H1 (cell line): ENCODE measurements at regions of chr11 and their contacts with region 1.

Region 1: GRCh38 chr11:119999220-119999619 is 138.7 kb downstream of the TRIM29 start:
- DNase-seq: no peak
- H3K4me3 ChIP-seq: no peak overlapping the region
- H3K27ac ChIP-seq: no peak overlapping the region
- H3K4me1 ChIP-seq: peaks cover 0 to 11% (median 7%) of the 10 kb centered on the region in 4 experiments; a peak in 4 of 7 replicates
- H3K27me3 ChIP-seq: no peaks in the 10 kb centered on the region
- CTCF ChIP-seq: peak; percentile 43 to 57 (median 55)
- EP300 ChIP-seq: no peak
- POLR2A ChIP-seq: no peak
- RAD21 ChIP-seq: peak; percentile 69 to 78

Region 2: DNA sequence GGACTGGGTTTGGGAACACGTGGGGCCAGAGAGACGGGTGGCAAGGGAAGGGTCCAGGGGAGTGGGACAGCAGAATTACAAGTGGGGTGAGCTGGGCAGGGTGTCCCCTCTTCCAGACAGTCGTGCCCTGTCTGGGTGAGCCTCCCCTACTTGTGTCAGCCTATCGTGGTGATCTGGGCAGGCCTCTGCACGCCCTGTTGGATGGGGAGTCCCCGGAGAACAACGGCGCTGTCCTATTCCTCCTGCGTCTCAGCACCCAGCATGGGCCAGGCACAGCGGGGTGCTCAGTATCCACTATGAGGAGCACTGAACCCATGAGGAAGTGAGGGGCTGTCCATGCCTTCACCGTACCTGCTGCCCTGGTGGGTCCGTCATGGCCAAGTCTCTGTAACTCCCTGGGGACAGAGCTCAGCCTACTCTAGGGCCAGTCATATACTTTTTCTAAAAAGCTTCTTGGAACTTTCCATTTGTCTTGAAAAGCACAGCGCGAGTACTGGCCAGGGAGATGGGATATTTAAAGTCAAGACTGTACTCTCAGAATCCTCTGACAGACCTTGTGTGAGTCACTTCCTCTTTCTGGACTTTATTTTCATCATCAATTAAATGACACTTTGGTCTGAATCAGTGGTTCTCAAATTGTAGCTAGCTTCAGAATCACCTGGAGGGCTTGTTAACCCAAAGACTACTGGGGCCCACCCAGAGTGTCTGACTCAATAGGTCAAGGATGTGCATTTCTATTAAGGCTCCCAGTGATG is 188.6 kb before region 1 on chr11:
- CTCF ChIA-PET with region 1: no interaction called
- POLR2A ChIA-PET with region 1: no interaction called
- DNase-seq: no peak
- H3K4me3 ChIP-seq: no peak overlapping the region
- H3K27ac ChIP-seq: no peak overlapping the region
- H3K4me1 ChIP-seq: no peaks in the 10 kb centered on the region; a peak in 1 of 7 replicates
- H3K27me3 ChIP-seq: no peaks in the 10 kb centered on the region; a peak in 1 of 7 replicates
- CTCF ChIP-seq: no peak
- EP300 ChIP-seq: no peak
- POLR2A ChIP-seq: no peak
- RAD21 ChIP-seq: no peak

Region 3: GRCh38 chr11:119975561-119976152 is 23.6 kb before region 1 on chr11:
- CTCF ChIA-PET with region 1: interaction called, 11 read pairs
- POLR2A ChIA-PET with region 1: no interaction called
- DNase-seq: peak; percentile 39 to 70
- H3K4me3 ChIP-seq: no peak overlapping the region
- H3K27ac ChIP-seq: no peak overlapping the region; the same call in 1 of the 2 replicates
- H3K4me1 ChIP-seq: peaks cover 2 to 15% (median 9%) of the 10 kb centered on the region in 4 experiments; a peak in 5 of 7 replicates
- H3K27me3 ChIP-seq: no peaks in the 10 kb centered on the region; a peak in 2 of 7 replicates
- CTCF ChIP-seq: no peak
- EP300 ChIP-seq: no peak
- POLR2A ChIP-seq: no peak
- RAD21 ChIP-seq: 0 out of 4 replicates have a peak, but pooled peaks have one; percentile 1 to 4

Region 4: DNA sequence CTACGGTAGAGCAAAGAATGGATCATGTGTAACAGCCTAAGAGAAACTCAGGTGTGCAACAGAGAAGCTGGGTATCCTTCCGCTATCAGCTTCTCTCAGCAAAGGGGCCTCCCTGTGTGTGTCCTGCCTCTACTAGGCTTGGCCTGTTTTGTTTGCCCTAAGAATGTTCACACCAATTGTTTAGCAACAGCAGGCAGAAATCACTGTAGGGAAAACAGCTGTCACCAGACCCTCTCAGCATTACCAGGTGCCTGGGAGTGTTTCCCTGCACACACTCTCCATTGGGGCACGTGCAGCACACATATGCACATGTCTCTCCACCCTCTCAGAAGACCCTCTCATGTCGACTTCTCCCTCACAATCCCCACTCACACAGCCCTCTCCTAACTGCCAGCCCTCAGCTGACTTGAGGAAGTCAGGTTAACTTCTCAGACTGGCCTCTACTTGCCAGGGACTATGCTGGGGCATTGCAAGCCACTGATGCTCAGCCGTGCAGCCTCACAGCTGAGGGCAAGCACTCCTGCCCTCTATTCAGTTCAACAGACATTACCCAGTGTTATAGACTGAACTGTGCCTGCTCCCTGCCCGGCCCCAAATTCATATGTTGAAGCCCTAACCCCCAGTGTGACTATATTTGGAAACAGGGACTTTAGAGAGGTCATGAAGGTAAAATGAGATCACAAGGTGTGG is 41.1 kb after region 1 on chr11:
- CTCF ChIA-PET with region 1: no interaction called
- POLR2A ChIA-PET with region 1: no interaction called
- DNase-seq: peak in 1 of 2 experiments; percentile 17
- H3K4me3 ChIP-seq: no peak overlapping the region
- H3K27ac ChIP-seq: no peak overlapping the region
- H3K4me1 ChIP-seq: peaks cover 0 to 4% (median 3%) of the 10 kb centered on the region in 4 experiments; a peak in 3 of 7 replicates
- H3K27me3 ChIP-seq: no peaks in the 10 kb centered on the region; a peak in 2 of 7 replicates
- CTCF ChIP-seq: no peak
- EP300 ChIP-seq: no peak
- POLR2A ChIP-seq: no peak
- RAD21 ChIP-seq: no peak

Region 5: DNA sequence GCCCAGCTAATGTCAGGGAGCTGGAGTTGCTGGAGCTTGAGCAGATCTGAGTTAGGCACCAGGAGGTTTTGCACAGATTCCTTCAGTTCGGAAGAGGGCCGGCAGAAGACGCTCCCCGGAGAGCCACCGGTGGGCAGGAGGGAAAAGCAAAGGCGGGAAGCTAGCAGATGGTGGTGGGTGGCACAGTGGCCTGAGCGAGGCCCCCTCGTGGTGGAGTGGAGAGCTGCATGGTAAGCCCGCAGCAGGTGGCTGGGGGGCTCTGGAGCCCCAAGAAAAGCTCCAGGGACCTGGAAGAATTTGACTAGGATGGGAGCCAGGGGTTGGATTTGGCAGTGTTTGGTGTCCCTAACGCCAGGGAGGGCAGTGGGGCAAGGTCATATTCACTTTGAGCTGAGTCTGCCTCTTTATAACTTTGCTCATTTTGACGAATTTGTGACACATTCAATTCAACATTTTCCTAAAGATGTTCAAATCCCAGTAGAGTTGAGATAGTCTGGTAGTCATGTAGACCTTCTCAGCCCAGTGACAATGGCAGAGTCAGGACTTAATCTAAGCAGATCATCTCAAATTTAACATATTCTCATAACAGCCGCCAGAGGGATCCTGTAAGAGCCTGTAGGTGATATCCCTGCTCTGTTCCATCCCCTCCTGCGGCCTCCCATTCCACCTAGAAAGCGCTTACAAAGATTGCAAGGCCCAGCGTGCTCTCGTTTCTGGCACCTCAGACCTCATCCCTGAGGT is 80.7 kb after region 1 on chr11:
- CTCF ChIA-PET with region 1: interaction called, 16 read pairs
- POLR2A ChIA-PET with region 1: no interaction called
- DNase-seq: peak in 1 of 2 experiments; percentile 82
- H3K4me3 ChIP-seq: no peak overlapping the region
- H3K27ac ChIP-seq: no peak overlapping the region
- H3K4me1 ChIP-seq: no peaks in the 10 kb centered on the region
- H3K27me3 ChIP-seq: no peaks in the 10 kb centered on the region; a peak in 2 of 7 replicates
- CTCF ChIP-seq: peak; percentile 74 to 82 (median 76)
- EP300 ChIP-seq: no peak
- POLR2A ChIP-seq: no peak
- RAD21 ChIP-seq: peak; percentile 55 to 72

Region 6: DNA sequence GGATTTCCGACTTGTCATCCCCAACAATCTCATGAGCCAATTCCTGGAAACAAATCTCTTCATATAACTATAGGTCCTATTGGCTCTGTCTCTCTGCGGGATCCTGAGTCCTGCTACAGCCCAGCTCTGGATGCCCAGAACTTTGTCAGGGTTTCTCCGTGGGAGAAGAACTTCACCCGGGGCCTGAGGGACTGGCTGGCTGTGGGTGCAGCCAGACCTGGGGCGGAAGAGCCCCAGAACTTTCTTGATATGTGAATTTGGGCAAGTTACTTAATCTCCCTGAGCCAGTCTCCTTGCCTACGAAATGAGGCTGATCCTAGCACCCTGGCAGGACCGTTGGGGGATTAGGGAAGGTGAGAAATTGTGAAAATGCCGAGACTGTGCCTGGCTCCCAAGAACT is 145.3 kb after region 1 on chr11:
- CTCF ChIA-PET with region 1: no interaction called
- POLR2A ChIA-PET with region 1: no interaction called
- DNase-seq: no peak
- H3K4me3 ChIP-seq: no peak overlapping the region
- H3K27ac ChIP-seq: no peak overlapping the region
- H3K4me1 ChIP-seq: peaks cover 0 to 2% (median 0%) of the 10 kb centered on the region in 4 experiments; a peak in 2 of 7 replicates
- H3K27me3 ChIP-seq: peaks cover 0 to 7% (median under 1%) of the 10 kb centered on the region in 4 experiments; a peak in 3 of 7 replicates
- CTCF ChIP-seq: no peak
- EP300 ChIP-seq: no peak
- POLR2A ChIP-seq: no peak
- RAD21 ChIP-seq: no peak